Spleen (tissue), 13 donors: ENCODE measurements at regions of chr19 and their contacts with region 1.

Region 1: DNA sequence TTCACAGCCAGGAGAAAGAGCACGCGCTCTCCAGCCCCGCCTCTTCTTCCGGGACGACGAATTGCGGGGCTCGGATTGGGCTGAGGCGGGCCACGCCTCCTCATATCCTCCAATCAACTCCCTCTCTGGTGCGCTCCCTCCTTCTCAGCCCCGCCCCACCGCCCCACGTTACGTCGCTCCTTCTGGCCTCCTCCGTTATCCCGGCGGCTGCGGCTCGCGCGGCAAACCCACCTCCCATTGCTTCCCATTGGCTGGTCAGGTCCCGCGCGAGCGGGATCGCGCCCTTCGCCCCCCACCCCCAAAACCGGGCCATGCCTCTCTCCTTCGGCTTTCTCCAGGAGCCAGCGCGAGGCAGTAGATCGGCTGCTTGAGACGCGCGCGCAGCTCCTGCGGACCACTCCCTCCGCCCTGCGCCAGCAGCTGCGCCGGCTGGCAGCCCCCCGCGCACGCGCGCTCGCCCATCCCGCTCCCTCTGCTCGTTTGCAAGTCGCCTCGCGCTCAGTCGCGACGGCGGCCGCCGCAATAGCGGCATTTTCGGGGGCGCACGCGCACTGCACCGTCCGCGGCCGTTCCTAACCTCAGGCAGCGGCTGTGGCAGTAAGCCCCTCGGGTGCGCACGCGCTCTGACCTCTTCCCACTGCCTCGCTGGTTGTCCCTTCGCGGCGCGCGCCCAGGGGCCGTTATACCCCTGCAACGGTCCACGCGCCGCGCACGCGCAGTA is 512 bp upstream of the ARHGAP35 start:
- DNase-seq: peak; percentile 96
- H3K4me3 ChIP-seq: peak overlapping the region; percentile 77 to 96 (median 92)
- H3K27ac ChIP-seq: peak overlapping the region; percentile 85 to 99 (median 96)
- H3K4me1 ChIP-seq: peaks cover 34 to 72% (median 60%) of the 10 kb centered on the region in 6 donors
- H3K27me3 ChIP-seq: no peaks in the 10 kb centered on the region
- CTCF ChIP-seq: peak in 2 of 11 experiments; percentile 3 to 16
- POLR2A ChIP-seq: peak in 2 of 3 donors; percentile 3 to 38

Region 2: DNA sequence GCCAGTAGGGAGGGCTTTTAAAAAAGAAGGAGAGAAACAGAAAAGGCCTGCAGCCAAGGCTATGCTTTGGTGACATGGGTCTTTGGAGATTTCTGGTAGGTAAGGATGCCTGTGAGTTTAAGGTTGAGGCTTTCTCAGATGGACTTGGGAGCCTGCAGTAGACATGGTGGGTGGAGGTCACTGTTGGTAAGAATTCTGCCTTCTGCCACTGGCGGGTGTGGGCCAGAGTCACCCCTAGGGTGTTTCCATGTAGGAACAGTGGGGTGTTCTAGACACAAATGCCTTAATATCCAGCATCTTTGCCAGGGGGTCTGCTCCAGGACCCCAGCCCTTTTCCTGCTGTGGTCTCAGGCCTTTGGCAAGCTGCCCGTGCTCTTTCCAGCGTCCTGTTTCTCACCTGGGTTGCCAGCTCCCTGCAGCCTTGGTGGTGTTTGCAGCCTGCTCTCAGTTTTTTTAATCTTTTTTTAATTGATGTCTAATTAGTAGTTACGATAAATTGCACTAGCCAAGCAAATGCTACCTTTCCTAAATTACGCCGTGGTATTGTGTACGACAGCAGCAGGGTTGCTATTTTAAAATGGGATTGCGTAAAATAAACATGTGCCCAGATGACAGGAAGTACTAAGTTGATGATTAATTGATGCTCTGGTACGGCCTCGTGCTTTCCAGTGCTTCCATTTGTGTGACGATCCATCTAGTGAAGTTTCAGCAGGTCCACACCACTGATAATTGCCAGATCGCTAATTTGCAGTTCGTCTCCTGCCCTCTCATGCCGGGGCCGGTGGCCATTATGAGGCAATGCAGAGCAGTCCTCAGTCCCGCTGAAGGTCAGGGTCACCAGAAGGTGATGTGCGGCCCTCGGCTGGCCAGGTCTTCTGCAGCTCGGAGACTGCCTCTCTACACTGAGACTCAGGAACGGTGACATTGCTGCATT is 124.1 kb after region 1 on chr19:
- intact Hi-C with region 1: loop called (anchors 5 kb)
- DNase-seq: peak; percentile 47
- H3K4me3 ChIP-seq: no peak overlapping the region
- H3K27ac ChIP-seq: peak overlapping the region in 1 of 8 donors; percentile 33
- H3K4me1 ChIP-seq: peaks cover 8 to 50% (median 39%) of the 10 kb centered on the region in 6 donors
- H3K27me3 ChIP-seq: no peaks in the 10 kb centered on the region
- CTCF ChIP-seq: no peak
- POLR2A ChIP-seq: no peak